PC-9 (cell line): ENCODE measurements at regions of chrX and their contacts with region 1.

Region 1: GRCh38 chrX:15674841-15675489 is 10.4 kb upstream of the CLTRN start:
- DNase-seq: peak; percentile 86 to 89
- H3K4me3 ChIP-seq: peak overlapping the region; percentile 78
- H3K27ac ChIP-seq: peak overlapping the region; percentile 95
- H3K4me1 ChIP-seq: peaks cover 21% of the 10 kb centered on the region
- H3K27me3 ChIP-seq: no peaks in the 10 kb centered on the region
- CTCF ChIP-seq: no peak

Region 2: GRCh38 chrX:14194711-14195110 is 1480.3 kb before region 1 on chrX:
- CTCF ChIA-PET with region 1: no interaction called
- POLR2A ChIA-PET with region 1: no interaction called
- intact Hi-C with region 1: no loop called
- DNase-seq: no peak
- H3K4me3 ChIP-seq: no peak overlapping the region
- H3K27ac ChIP-seq: no peak overlapping the region
- H3K4me1 ChIP-seq: no peaks in the 10 kb centered on the region
- H3K27me3 ChIP-seq: no peaks in the 10 kb centered on the region
- CTCF ChIP-seq: no peak

Region 3: DNA sequence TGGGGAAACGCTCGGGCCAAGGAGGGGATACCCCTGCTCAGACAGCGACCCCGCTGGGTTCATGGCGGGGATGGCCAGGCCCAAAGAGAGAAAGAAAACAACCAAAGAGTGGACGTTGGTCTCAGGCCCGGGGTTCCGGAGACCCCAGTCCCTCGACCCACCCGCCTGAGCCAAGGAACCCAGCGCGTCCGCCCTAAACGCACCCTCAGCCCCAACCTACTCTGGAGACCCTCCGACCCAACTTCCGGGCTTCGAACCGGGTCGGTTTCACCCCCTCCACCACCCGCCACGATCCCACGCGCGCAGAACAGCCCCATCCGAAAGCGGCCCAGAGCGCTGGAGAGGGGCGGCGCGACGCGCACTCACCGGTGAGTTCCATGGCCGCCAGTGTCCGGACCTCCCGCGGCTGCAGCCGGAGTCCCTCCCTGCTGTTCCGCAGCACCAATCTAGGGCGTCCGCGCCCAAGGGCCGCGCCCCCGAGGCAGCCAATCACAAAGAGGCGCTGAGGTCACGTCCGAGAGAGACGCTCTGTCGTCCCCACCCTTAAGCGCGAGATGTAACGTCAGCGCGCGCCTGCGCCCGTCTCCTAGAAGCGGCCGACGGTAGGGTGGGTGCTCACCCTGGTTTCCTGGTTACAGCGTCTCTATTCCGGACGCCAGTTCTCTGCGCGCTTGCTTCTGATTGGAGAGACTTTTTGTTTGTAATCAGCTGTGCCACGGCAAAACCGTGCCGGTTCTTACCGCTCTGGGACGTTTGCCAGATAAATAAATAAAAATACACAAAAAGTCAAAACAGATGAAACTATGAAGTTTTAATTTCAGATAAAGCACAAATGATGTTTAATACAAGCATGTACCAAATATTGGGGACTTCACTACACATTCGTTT is 339.6 kb before region 1 on chrX and contains the start of gene PIGA:
- CTCF ChIA-PET with region 1: no interaction called
- POLR2A ChIA-PET with region 1: no interaction called
- intact Hi-C with region 1: loop called (anchors 10 kb)
- DNase-seq: peak; percentile 94 to 95
- H3K4me3 ChIP-seq: peak within 1 kb of the TSS; percentile 82
- H3K27ac ChIP-seq: peak within 1 kb of the TSS; percentile 89
- H3K4me1 ChIP-seq: peaks cover 13% of the 10 kb centered on the region
- H3K27me3 ChIP-seq: no peaks in the 10 kb centered on the region
- CTCF ChIP-seq: no peak
- total RNA-seq, gene PIGA: 9.0 and 15.3 TPM in 2 replicates

Region 4: DNA sequence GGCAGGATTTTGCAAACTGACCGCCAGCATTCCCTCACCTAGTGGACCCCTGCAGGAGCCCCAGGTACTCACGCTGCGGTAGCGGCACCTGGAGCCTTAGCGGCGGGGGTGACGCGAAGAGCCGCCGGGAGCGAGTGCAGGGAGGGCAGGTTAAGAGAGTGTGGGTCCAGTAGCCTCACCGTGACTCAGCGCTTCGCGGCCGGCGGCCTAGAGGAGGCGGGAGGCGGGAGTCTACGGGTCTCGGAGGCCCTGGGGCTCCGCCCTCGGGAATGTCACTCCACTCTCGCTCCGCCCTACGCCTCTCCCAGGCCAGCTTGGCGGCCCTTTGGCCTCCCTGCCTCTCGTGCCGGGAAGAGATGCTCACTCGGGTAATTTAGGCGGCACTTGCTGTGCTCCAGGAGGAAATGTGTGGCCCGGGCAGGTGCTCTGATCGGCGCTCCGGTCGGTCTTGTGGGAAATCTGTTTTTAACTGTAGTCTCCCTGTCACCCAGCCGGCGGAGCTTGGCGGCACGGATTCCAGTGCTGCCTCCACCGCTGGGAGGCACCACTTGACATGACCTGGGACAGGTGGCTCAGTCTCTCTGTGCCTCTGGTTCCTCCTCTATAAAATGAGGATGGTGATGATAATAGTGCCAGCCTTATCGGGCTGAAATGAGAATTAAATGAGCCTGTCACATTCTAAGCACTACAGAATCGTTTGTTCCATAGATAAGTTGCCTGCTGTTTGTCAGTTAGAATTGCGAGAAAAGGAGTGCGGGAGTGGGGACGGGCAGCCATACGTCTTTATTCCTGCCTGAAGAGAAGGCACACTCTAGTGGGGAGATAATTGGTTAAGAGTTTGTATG is 181.6 kb before region 1 on chrX and contains the start of gene PIR:
- CTCF ChIA-PET with region 1: interaction called, 4 read pairs
- POLR2A ChIA-PET with region 1: no interaction called
- intact Hi-C with region 1: loop called (anchors 1 kb)
- DNase-seq: peak; percentile 82 to 94
- H3K4me3 ChIP-seq: peak within 1 kb of the TSS; percentile 86
- H3K27ac ChIP-seq: peak within 1 kb of the TSS; percentile 94
- H3K4me1 ChIP-seq: peaks cover 23% of the 10 kb centered on the region
- H3K27me3 ChIP-seq: no peaks in the 10 kb centered on the region
- CTCF ChIP-seq: peak; percentile 40; the same call in 1 of the 2 replicates
- total RNA-seq, gene PIR: 177 and 197 TPM in 2 replicates

Region 5: GRCh38 chrX:15579778-15580747 is 94.9 kb before region 1 on chrX:
- CTCF ChIA-PET with region 1: no interaction called
- POLR2A ChIA-PET with region 1: no interaction called
- intact Hi-C with region 1: no loop called
- DNase-seq: peak in 1 of 2 experiments; percentile 53
- H3K4me3 ChIP-seq: no peak overlapping the region
- H3K27ac ChIP-seq: peak overlapping the region; percentile 28
- H3K4me1 ChIP-seq: 0 out of 2 replicates have a peak, but pooled peaks cover 4% of the 10 kb centered on the region
- H3K27me3 ChIP-seq: no peaks in the 10 kb centered on the region
- CTCF ChIP-seq: no peak

Region 6: GRCh38 chrX:15598036-15598435 is 76.9 kb before region 1 on chrX:
- CTCF ChIA-PET with region 1: no interaction called
- POLR2A ChIA-PET with region 1: no interaction called
- intact Hi-C with region 1: loop called (anchors 2 kb)
- DNase-seq: peak; percentile 9 to 83
- H3K4me3 ChIP-seq: no peak overlapping the region
- H3K27ac ChIP-seq: peak overlapping the region; percentile 59
- H3K4me1 ChIP-seq: peaks cover 54% of the 10 kb centered on the region
- H3K27me3 ChIP-seq: no peaks in the 10 kb centered on the region
- CTCF ChIP-seq: no peak

Region 7: DNA sequence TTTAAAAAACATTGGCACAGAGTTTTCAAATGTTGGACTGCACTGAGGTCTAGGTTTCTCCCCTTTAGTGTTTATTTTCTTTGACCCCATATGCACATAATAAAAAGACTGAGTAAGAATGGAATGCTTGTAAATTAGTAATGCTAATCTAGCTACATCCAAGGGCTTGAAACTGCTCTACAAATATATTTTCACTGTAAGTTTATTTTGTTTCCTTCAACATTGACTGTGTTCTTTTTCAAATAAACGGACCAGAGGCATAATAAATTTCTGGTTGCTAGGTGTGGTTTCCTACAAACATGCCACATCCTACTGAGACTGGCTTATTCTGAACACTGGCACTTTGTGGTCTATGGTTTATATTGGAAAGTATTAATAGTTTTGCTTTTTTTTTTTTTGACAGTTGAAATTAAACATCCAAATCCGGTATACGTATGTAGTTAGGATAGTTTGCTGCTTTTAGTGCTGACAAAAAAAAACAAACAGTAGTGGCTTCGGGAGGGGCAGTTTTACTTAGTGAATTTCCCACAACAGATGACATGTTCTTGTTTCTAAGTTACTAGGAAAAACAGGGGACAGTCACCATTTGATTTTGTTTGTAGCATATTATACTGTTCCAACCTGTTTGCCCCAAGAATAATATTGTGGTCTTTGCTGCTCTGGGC is 76.3 kb after region 1 on chrX:
- CTCF ChIA-PET with region 1: no interaction called
- POLR2A ChIA-PET with region 1: no interaction called
- intact Hi-C with region 1: no loop called
- DNase-seq: no peak
- H3K4me3 ChIP-seq: no peak overlapping the region
- H3K27ac ChIP-seq: no peak overlapping the region
- H3K4me1 ChIP-seq: no peaks in the 10 kb centered on the region
- H3K27me3 ChIP-seq: no peaks in the 10 kb centered on the region
- CTCF ChIP-seq: no peak